Adrenal gland (tissue), 19 donors: ENCODE measurements at regions of chr1 and their contacts with region 1.

Region 1: GRCh38 chr1:180188091-180188506 is 33.4 kb downstream of the QSOX1 start:
- DNase-seq: peak; percentile 58 to 75 (median 68)
- H3K4me3 ChIP-seq: no peak overlapping the region
- H3K27ac ChIP-seq: no peak overlapping the region
- H3K4me1 ChIP-seq: no peaks in the 10 kb centered on the region
- H3K27me3 ChIP-seq: no peaks in the 10 kb centered on the region
- CTCF ChIP-seq: peak; percentile 51 to 76 (median 68)
- POLR2A ChIP-seq: no peak

Region 2: GRCh38 chr1:179770884-179771502 is 417.1 kb before region 1 on chr1:
- intact Hi-C with region 1: no loop called
- DNase-seq: no peak
- H3K4me3 ChIP-seq: no peak overlapping the region
- H3K27ac ChIP-seq: peak overlapping the region in 1 of 5 donors; percentile 5
- H3K4me1 ChIP-seq: no peaks in the 10 kb centered on the region
- H3K27me3 ChIP-seq: no peaks in the 10 kb centered on the region
- CTCF ChIP-seq: no peak
- POLR2A ChIP-seq: no peak

Region 3: DNA sequence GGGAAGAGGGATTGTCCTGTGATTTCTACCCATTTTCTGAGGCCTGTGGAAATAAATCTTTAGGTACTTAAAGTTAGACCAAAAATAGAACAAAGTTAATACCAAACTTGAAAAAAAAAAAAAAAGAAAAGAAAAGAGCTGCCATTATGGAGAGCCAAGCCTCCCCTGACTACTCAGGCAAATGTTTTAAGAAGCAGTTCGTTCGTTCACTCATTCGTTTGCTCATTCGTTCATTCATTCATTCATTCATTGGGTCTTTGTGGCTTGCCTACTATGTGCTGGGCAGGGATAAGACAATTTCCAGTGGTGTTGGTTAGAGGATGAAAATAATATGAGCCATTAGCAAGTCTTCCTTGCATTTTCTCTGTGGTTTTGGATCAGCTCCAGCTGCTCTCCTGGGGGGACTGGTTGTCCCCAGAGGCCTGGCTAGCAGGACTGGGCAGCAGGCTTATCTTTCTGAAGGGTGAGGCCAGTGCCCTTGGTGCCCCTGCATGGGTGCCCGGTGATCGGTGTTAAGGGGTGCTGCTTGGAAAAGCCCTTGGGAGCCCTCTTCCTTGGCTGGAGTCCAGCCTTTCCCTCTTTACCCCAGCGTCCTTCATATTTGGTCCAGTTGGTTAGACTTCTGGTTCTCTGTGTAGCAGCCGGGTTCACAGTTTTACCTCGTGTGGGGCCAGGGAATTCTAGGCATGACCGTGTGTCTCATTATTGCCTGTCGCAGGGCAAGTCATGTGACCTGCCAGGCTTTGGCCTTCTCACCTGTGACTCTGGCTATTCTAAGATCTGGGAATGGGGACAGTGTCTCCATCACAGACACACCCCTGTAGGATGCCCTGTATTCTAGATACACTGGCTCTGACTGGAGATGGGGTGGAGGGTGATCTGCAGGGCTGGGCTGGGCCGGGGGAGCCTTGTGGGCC is 74.7 kb after region 1 on chr1:
- intact Hi-C with region 1: no loop called
- DNase-seq: peak in 1 of 7 donors; percentile 10
- H3K4me3 ChIP-seq: no peak overlapping the region
- H3K27ac ChIP-seq: no peak overlapping the region
- H3K4me1 ChIP-seq: no peaks in the 10 kb centered on the region
- H3K27me3 ChIP-seq: peaks cover 22% of the 10 kb centered on the region
- CTCF ChIP-seq: no peak
- POLR2A ChIP-seq: no peak

Region 4: GRCh38 chr1:180470031-180470430 is 281.9 kb after region 1 on chr1:
- intact Hi-C with region 1: loop called (anchors 5 to 10 kb)
- DNase-seq: no peak
- H3K4me3 ChIP-seq: no peak overlapping the region
- H3K27ac ChIP-seq: no peak overlapping the region
- H3K4me1 ChIP-seq: no peaks in the 10 kb centered on the region
- H3K27me3 ChIP-seq: no peaks in the 10 kb centered on the region
- CTCF ChIP-seq: no peak
- POLR2A ChIP-seq: no peak

Region 5: GRCh38 chr1:180530501-180530900 is 342.4 kb after region 1 on chr1:
- intact Hi-C with region 1: no loop called
- DNase-seq: peak in 1 of 7 donors; percentile 31
- H3K4me3 ChIP-seq: no peak overlapping the region
- H3K27ac ChIP-seq: peak overlapping the region in 1 of 5 donors; percentile 54
- H3K4me1 ChIP-seq: no peaks in the 10 kb centered on the region
- H3K27me3 ChIP-seq: no peaks in the 10 kb centered on the region
- CTCF ChIP-seq: no peak
- POLR2A ChIP-seq: no peak